ENCODE measurements at regions of chr5 and their contacts with region 1.

Region 1: DNA sequence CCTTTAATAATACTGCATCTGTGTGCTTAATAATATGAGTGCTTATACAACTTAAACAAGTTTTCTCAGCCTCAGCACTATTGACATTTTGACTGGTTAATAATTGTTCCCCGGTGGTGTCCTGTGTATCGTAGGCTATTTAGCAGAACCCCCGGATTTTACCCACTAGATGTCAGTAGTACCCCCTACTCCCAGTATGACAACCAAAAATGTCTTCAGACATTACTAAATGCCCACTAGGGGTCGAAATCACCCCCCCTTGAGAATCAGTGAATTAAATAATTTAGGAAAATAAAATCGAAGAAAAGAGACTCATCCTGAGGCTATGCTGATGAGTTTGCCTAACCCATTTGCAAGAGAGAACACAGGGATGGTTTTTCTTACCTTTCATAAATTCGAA is 166.3 kb downstream of the ATP10B start:
- DNase-seq: peak; percentile 61
- H3K4me3 Mint-ChIP-seq: no peak overlapping the region
- H3K27ac Mint-ChIP-seq: no peak overlapping the region
- H3K4me1 Mint-ChIP-seq: peaks cover 12% of the 10 kb centered on the region
- H3K27me3 Mint-ChIP-seq: no peaks in the 10 kb centered on the region
- CTCF ChIP-seq: peak; percentile 78

Region 2: GRCh38 chr5:160787240-160787639 is 101.5 kb after region 1 on chr5:
- CTCF ChIA-PET with region 1: no interaction called
- intact Hi-C with region 1: loop called (anchors 1 kb)
- DNase-seq: peak; percentile 78
- H3K4me3 Mint-ChIP-seq: peak overlapping the region; percentile 1
- H3K27ac Mint-ChIP-seq: no peak overlapping the region
- H3K4me1 Mint-ChIP-seq: peaks cover 12% of the 10 kb centered on the region
- H3K27me3 Mint-ChIP-seq: no peaks in the 10 kb centered on the region
- CTCF ChIP-seq: peak; percentile 73